ENCODE measurements at regions of chr12 and their contacts with region 1.

Region 1: GRCh38 chr12:47207340-47207717 is 127.6 kb upstream of the AMIGO2 start:
- DNase-seq: peak in 4 of 9 donors; percentile 27 to 49 (median 38)
- ATAC-seq: peak; percentile 79
- H3K4me3 ChIP-seq: peak overlapping the region; percentile 42
- H3K4me3 Mint-ChIP-seq: peak overlapping the region; percentile 60 to 99 (median 84)
- H3K27ac ChIP-seq: peak overlapping the region; percentile 76
- H3K27ac Mint-ChIP-seq: peak overlapping the region; percentile 41 to 98 (median 93)
- H3K4me1 ChIP-seq: peaks cover 72 to 78% of the 10 kb centered on the region in 2 donors
- H3K4me1 Mint-ChIP-seq: peaks cover 50 to 93% (median 75%) of the 10 kb centered on the region in 7 donors
- H3K27me3 ChIP-seq: no peaks in the 10 kb centered on the region
- H3K27me3 Mint-ChIP-seq: no peaks in the 10 kb centered on the region

Region 2: DNA sequence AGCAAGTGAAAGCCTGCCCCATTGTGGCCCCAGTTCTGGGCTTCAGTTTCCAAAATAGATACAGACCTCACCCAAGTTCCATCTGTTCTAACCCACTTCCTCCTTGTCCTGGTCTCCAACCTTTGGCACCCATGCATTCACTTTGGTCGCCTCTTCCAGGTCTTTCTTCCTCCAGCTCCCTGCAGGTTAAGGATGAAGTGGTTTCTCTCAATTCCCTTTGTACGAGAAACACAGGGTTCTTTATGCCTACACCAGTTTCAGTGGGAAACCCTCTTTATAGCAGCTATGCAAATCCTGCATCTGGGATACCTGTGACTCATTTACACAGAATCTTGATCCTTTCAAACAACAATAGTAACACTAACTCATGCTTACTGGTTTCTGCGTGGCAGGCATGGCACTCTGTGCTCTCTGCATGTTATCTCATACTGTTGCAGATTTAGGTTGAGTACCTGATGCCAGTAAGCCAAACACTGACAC is 17.0 kb before region 1 on chr12:
- CTCF ChIA-PET with region 1: interaction called, 6 read pairs
- POLR2A ChIA-PET with region 1: interaction called, 173 read pairs
- intact Hi-C with region 1: loop called (anchors 1 to 2 kb)
- DNase-seq: no peak
- ATAC-seq: no peak
- H3K4me3 ChIP-seq: no peak overlapping the region
- H3K4me3 Mint-ChIP-seq: peak overlapping the region; percentile 42 to 87 (median 76)
- H3K27ac ChIP-seq: peak overlapping the region; percentile 61
- H3K27ac Mint-ChIP-seq: peak overlapping the region; percentile 81 to 98 (median 93)
- H3K4me1 ChIP-seq: peaks cover 52 to 77% of the 10 kb centered on the region in 2 donors
- H3K4me1 Mint-ChIP-seq: peaks cover 69 to 98% (median 93%) of the 10 kb centered on the region in 7 donors
- H3K27me3 ChIP-seq: no peaks in the 10 kb centered on the region
- H3K27me3 Mint-ChIP-seq: no peaks in the 10 kb centered on the region

Region 3: GRCh38 chr12:47221256-47222023 is 14.1 kb after region 1 on chr12:
- CTCF ChIA-PET with region 1: interaction called, 9 read pairs
- POLR2A ChIA-PET with region 1: interaction called, 32 read pairs
- intact Hi-C with region 1: loop called (anchors 1 kb)
- DNase-seq: no peak
- ATAC-seq: no peak
- H3K4me3 ChIP-seq: peak overlapping the region; percentile 3
- H3K4me3 Mint-ChIP-seq: peak overlapping the region; percentile 72 to 93 (median 82)
- H3K27ac ChIP-seq: peak overlapping the region; percentile 76
- H3K27ac Mint-ChIP-seq: peak overlapping the region; percentile 75 to 96 (median 85)
- H3K4me1 ChIP-seq: peaks cover 49 to 50% of the 10 kb centered on the region in 2 donors
- H3K4me1 Mint-ChIP-seq: peaks cover 49 to 72% (median 65%) of the 10 kb centered on the region in 7 donors
- H3K27me3 ChIP-seq: no peaks in the 10 kb centered on the region
- H3K27me3 Mint-ChIP-seq: no peaks in the 10 kb centered on the region

Region 4: DNA sequence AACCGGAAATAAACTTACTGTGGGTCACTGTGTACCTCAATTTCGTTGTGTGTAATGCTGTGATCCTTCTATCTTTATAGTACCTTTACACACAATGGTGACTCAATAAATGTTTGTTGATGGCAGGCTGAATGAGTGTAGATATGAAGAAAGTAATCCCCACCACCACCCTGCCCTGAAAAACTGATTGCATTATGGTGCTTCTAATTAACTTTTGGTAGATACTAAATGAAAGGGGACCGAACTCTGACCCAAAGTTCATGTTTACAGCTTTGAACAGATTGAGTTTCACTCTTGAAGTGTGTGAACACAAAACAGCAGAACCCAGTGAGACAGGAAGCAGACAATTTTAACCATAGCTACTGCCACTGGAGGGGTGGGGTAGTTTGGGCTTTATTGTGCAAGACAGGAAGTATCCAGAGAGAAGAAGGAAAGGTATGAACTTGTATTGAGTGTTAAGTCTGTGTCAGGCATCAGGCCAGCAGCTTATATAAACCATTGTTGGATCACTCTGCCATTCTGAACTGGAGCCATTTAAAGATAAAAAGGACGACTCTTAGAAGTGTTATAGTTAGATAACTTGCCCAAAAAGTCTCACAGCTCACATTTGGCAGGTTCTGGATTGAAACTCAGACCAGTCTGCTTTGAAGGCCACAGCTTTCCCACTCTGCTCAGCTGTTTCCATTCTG is 69.4 kb after region 1 on chr12:
- CTCF ChIA-PET with region 1: no interaction called
- POLR2A ChIA-PET with region 1: interaction called, 14 read pairs
- intact Hi-C with region 1: no loop called
- DNase-seq: peak; percentile 12 to 89 (median 84)
- ATAC-seq: peak; percentile 97
- H3K4me3 ChIP-seq: peak overlapping the region; percentile 31
- H3K4me3 Mint-ChIP-seq: peak overlapping the region; percentile 51 to 83 (median 74)
- H3K27ac ChIP-seq: peak overlapping the region; percentile 69
- H3K27ac Mint-ChIP-seq: peak overlapping the region; percentile 90 to 98 (median 92)
- H3K4me1 ChIP-seq: peaks cover 28 to 73% of the 10 kb centered on the region in 2 donors
- H3K4me1 Mint-ChIP-seq: peaks cover 42 to 97% (median 90%) of the 10 kb centered on the region in 7 donors
- H3K27me3 ChIP-seq: no peaks in the 10 kb centered on the region
- H3K27me3 Mint-ChIP-seq: no peaks in the 10 kb centered on the region

Measured in naive thymus-derived CD4-positive, alpha-beta T cell (primary cell).